GM12878 (cell line): ENCODE measurements at regions of chr1 and their contacts with region 1.

Region 1: GRCh38 chr1:160078512-160079195 is 2.7 kb upstream of the KCNJ9 start:
- DNase-seq: no peak
- ATAC-seq: peak; percentile 96
- H3K4me3 ChIP-seq: no peak overlapping the region
- H3K27ac ChIP-seq: no peak overlapping the region
- H3K4me1 ChIP-seq: no peaks in the 10 kb centered on the region; the same call in 1 of the 2 replicates
- H3K27me3 ChIP-seq: peaks cover 0 to 2% of the 10 kb centered on the region in 2 experiments; a peak in 3 of 4 replicates
- CTCF ChIP-seq: peak; percentile 78 to 97 (median 92)
- EP300 ChIP-seq: no peak
- POLR2A ChIP-seq: no peak
- RAD21 ChIP-seq: peak; percentile 78

Region 2: GRCh38 chr1:159936273-159936904 is 142.3 kb before region 1 on chr1:
- CTCF ChIA-PET with region 1: interaction called, 16 read pairs
- POLR2A ChIA-PET with region 1: no interaction called
- RAD21 ChIA-PET with region 1: interaction called, 3 read pairs
- SMC1A ChIA-PET with region 1: interaction called, 6 read pairs
- in situ Hi-C with region 1: no loop called
- intact Hi-C with region 1: no loop called
- DNase-seq: no peak
- ATAC-seq: peak; percentile 86
- H3K4me3 ChIP-seq: no peak overlapping the region
- H3K27ac ChIP-seq: no peak overlapping the region
- H3K4me1 ChIP-seq: peaks cover 23% of the 10 kb centered on the region
- H3K27me3 ChIP-seq: 0 out of 4 replicates have a peak, but pooled peaks cover 0 to 2% of the 10 kb centered on the region in 2 experiments
- CTCF ChIP-seq: peak; percentile 98; a peak in 5 of 6 replicates
- EP300 ChIP-seq: no peak
- POLR2A ChIP-seq: no peak
- RAD21 ChIP-seq: peak; percentile 87

Region 3: DNA sequence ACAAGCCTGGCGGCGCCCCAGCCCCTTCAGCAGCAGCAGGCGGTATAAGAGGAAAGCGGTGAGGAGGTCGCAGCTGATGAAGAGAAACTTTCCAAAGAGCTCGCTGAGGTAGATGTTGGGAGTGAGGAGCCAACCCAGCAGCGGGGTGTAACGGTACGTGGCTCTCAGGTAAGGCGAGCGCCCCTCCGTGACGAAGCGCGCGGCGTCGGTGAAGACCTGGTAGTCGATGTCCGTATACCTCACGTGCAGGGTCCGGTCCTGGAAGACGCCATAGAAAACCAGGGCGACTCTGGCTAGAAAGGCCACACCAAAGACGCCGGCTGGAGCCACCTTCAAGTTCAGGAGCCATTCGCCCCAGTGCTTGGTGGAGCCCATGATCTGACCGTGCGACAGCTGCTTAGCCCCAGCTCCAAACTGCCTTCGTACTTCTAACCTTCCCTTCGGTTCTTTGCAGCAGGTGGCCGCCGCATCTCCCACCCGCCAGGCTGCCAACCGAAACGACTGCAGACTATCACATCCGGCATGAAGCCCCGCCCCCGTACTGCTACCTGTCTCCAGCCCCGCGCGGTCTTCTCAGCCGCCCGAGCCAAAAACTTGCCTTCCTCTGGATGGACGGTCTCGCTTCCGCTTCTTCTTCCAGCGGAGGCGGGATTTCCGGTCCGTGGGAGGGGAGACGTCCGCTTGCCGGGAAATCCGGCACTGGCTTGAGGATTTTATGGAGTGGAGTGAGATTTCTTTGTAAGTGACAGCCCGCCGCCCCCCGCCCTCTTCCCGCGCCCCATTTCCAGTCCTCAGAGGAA is 47.1 kb before region 1 on chr1 and contains the start of gene PIGM:
- CTCF ChIA-PET with region 1: interaction called, 1,035 read pairs
- POLR2A ChIA-PET with region 1: interaction called, 3 read pairs
- RAD21 ChIA-PET with region 1: interaction called, 6 read pairs
- SMC1A ChIA-PET with region 1: interaction called, 3 read pairs
- in situ Hi-C with region 1: no loop called
- intact Hi-C with region 1: no loop called
- DNase-seq: peak; percentile 66
- ATAC-seq: peak; percentile 97
- H3K4me3 ChIP-seq: peak within 1 kb of the TSS; percentile 97
- H3K27ac ChIP-seq: peak within 1 kb of the TSS; percentile 48
- H3K4me1 ChIP-seq: peaks cover 5% of the 10 kb centered on the region; the same call in 1 of the 2 replicates
- H3K27me3 ChIP-seq: no peaks in the 10 kb centered on the region
- CTCF ChIP-seq: no peak
- EP300 ChIP-seq: no peak
- POLR2A ChIP-seq: peak; percentile 79
- RAD21 ChIP-seq: no peak
- polyA plus RNA-seq, gene PIGM: 2.6 to 3.7 TPM

Region 4: GRCh38 chr1:160058087-160058486 is 20.6 kb before region 1 on chr1:
- CTCF ChIA-PET with region 1: interaction called, 1,035 read pairs
- POLR2A ChIA-PET with region 1: interaction called, 3 read pairs
- RAD21 ChIA-PET with region 1: interaction called, 16 read pairs
- SMC1A ChIA-PET with region 1: interaction called, 19 read pairs
- in situ Hi-C with region 1: no loop called
- intact Hi-C with region 1: no loop called
- DNase-seq: no peak
- ATAC-seq: no peak
- H3K4me3 ChIP-seq: no peak overlapping the region
- H3K27ac ChIP-seq: no peak overlapping the region
- H3K4me1 ChIP-seq: no peaks in the 10 kb centered on the region
- H3K27me3 ChIP-seq: peaks cover 2 to 9% of the 10 kb centered on the region in 2 experiments
- CTCF ChIP-seq: peak; percentile 8 to 27 (median 21); a peak in 2 of 6 replicates
- EP300 ChIP-seq: no peak
- POLR2A ChIP-seq: no peak
- RAD21 ChIP-seq: 0 out of 2 replicates have a peak, but pooled peaks have one; percentile 3